ENCODE measurements at regions of chr10 and their contacts with region 1.

Region 1: DNA sequence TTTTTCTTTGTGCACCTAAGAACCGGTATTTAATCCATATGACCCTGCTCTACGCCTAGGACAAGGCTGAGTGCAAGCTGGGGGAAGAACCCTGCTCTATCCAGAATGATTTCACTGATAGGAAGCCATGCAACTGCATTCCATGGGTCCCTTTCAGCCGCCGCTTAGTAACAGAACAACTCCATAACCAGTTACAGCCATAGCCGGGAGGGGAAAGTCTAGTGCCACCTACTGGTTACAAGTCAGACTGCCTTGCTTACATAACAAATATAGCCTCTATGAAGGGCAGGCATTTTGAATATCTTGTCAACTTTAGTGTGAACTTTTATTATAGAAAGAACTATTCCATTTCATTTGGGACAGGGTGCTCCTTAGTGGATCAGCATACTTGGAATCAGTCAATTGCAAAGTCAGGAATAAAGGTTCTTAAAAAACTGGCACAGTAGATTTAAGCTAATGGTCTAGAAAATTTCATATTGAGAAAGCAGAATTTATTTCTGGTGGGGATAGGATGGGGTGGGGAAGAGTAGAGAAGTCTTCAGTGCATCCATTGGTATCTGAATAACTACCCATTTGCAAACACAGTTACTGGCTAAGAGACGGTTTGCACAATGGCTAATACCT is 521.7 kb downstream of the ADRA2A start:
- H3K4me3 ChIP-seq: no peak overlapping the region
- H3K27ac ChIP-seq: no peak overlapping the region
- H3K4me1 ChIP-seq: no peaks in the 10 kb centered on the region
- CTCF ChIP-seq: 0 out of 2 replicates have a peak, but pooled peaks have one; percentile 14

Region 2: GRCh38 chr10:111076191-111076681 is 522.3 kb before region 1 on chr10:
- CTCF ChIA-PET with region 1: interaction called, 25 read pairs
- POLR2A ChIA-PET with region 1: no interaction called
- H3K4me3 ChIP-seq: peak overlapping the region; percentile 51
- H3K27ac ChIP-seq: no peak overlapping the region
- H3K4me1 ChIP-seq: peaks cover 2% of the 10 kb centered on the region; the same call in 1 of the 2 replicates
- CTCF ChIP-seq: peak; percentile 92

Region 3: DNA sequence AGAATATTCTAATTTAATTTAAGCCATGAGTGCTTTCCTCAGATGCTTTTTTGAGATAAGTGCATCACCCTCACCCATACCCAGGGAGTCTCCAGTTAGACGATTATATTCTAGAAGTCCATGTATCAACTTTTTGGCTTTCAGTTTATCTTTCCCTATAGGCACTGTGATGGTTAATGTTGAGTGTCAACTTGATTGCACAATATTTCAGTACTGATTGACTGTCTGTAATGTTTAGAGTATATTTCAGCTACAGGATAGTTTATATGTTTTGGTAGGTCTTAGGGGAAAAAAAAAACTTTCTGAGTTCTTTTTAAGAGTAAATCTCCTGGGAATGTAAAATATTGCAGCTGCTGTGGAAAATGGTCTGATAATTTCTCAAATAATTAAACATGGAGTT is 13.7 kb after region 1 on chr10:
- CTCF ChIA-PET with region 1: interaction called, 20 read pairs
- POLR2A ChIA-PET with region 1: no interaction called
- H3K4me3 ChIP-seq: no peak overlapping the region
- H3K27ac ChIP-seq: no peak overlapping the region
- H3K4me1 ChIP-seq: no peaks in the 10 kb centered on the region
- CTCF ChIP-seq: no peak